ENCODE measurements at regions of chr11 and their contacts with region 1.

Region 1: DNA sequence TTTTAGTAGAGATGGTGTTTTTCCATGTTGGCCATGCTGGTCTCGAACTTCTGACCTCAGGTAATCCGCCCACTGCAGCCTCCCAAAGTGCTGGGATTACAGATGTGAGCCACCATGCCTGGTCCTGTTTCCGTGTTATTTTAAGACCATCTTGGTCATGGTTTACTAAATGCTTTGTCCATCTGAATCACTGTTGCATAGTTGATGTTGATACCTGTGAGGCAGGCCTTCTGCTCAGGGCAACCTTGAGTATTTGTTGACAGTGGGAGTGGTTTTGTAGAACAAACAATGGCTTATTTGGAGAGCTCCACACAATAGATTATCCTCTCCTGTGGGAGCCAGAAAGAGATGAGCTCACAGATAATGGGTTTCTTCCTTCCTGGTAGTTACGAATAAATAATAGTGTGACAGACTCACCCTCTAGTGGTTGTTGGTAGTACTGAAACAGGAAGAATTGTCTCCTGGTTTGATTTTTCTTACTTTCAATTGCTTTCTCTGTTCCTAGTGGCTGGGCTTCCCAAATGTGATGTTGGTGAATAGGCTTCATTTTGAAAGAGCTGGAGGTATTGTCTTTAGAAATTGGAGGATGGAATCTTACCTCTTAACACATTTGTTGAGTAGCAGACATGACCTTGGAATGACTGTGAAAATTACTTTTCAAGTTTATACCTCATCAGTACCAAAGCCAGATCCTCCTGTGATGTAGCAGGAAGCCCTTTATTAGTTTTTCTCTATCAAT is 39.0 kb downstream of the CTNND1 start:
- DNase-seq: peak; percentile 13
- H3K4me3 Mint-ChIP-seq: no peak overlapping the region
- H3K27ac Mint-ChIP-seq: peak overlapping the region; percentile 26
- H3K4me1 Mint-ChIP-seq: peaks cover 23% of the 10 kb centered on the region
- H3K27me3 Mint-ChIP-seq: no peaks in the 10 kb centered on the region

Region 2: GRCh38 chr11:57751676-57752253 is 48.8 kb before region 1 on chr11 and contains the start of gene BTBD18:
- intact Hi-C with region 1: loop called (anchors 1 kb)
- DNase-seq: no peak
- H3K4me3 Mint-ChIP-seq: no peak within 1 kb of the TSS
- H3K27ac Mint-ChIP-seq: no peak within 1 kb of the TSS
- H3K4me1 Mint-ChIP-seq: peaks cover 12% of the 10 kb centered on the region
- H3K27me3 Mint-ChIP-seq: no peaks in the 10 kb centered on the region
- total RNA-seq, gene BTBD18: 0.07 TPM in 1 of 2 replicates, not detected in the other

Region 3: GRCh38 chr11:57785072-57785471 is 15.5 kb before region 1 on chr11:
- intact Hi-C with region 1: no loop called
- DNase-seq: no peak
- H3K4me3 Mint-ChIP-seq: no peak overlapping the region
- H3K27ac Mint-ChIP-seq: no peak overlapping the region
- H3K4me1 Mint-ChIP-seq: peaks cover 25% of the 10 kb centered on the region
- H3K27me3 Mint-ChIP-seq: no peaks in the 10 kb centered on the region

Region 4: GRCh38 chr11:57905439-57905838 is 104.8 kb after region 1 on chr11:
- intact Hi-C with region 1: no loop called
- DNase-seq: no peak
- H3K4me3 Mint-ChIP-seq: no peak overlapping the region
- H3K27ac Mint-ChIP-seq: no peak overlapping the region
- H3K4me1 Mint-ChIP-seq: peaks cover 9% of the 10 kb centered on the region
- H3K27me3 Mint-ChIP-seq: peaks cover 2% of the 10 kb centered on the region

Measured in activated T-helper 1 cell treated with anti-CD3 and anti-CD28 coated beads, Interleukin-12 subunit alpha, Interleukin-12 subunit beta, Interleukin-2, Interleukin-4 antibody, amounts not matched to agents 30 ng/mL and 10 ng/mL and 1 ng/mL, durations not matched to agents 14 hours and 24 hours and 36 hours (primary cell).